ENCODE measurements at regions of chr1 and their contacts with region 1.

Region 1: DNA sequence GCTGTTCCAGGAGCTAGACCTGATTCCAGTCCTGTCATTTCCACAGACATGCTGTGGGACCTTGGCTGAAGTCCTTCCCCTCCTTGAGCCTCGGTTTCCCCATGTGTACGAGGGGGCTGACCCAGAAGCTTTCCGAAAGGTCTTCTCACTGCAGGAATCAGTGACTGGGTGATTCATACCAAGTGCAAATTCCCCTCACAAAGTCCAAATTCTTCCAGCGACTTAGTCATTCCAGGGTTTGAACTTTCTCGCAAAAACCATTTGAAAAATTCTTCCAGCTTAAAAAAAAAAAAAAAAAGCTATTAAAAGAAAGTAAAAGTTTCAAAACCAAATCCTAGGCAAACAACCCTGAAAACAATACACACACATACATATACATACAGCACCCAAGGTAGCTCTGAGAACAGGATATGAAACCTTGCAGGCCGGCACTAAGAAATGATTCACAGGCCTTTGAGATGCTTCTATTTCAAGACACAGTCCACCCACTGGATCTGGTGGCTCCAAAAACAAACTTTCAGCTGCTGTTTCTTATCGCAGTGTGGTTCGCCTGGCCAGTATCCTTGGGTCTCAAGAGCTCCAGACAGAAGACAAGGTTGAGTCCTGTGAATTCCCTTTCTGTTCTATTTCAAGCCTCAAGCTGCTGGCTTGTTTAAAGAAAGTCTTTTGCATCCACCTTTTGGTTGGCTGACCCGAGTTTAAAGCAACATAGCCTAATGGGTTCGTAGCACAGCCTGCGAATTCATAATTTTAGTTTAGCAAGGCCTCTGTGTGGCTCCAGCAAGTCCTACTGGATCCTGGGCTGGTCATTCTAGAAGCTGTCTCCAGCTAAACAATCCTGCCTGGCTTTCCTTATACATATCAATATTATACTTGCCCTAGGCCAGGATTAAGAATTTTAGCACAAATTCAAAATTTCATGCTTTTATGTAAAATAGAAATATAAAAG is 18.0 kb upstream of the ID3 start:
- DNase-seq: peak in 2 of 14 experiments; percentile 44 to 52
- ATAC-seq: peak; percentile 81
- H3K4me3 ChIP-seq: no peak overlapping the region
- H3K4me3 Mint-ChIP-seq: peak overlapping the region; percentile 64
- H3K27ac ChIP-seq: peak overlapping the region in 1 of 2 donors; percentile 13
- H3K27ac Mint-ChIP-seq: peak overlapping the region; percentile 43
- H3K4me1 ChIP-seq: peaks cover 29% of the 10 kb centered on the region
- H3K4me1 Mint-ChIP-seq: peaks cover 56% of the 10 kb centered on the region
- H3K27me3 ChIP-seq: no peaks in the 10 kb centered on the region
- H3K27me3 Mint-ChIP-seq: no peaks in the 10 kb centered on the region
- CTCF ChIP-seq: no peak

Region 2: GRCh38 chr1:23591460-23592208 is 14.3 kb after region 1 on chr1:
- CTCF ChIA-PET with region 1: interaction called, 3 read pairs
- POLR2A ChIA-PET with region 1: interaction called, 17 read pairs
- intact Hi-C with region 1: no loop called
- DNase-seq: peak in 3 of 14 experiments; percentile 24 to 63 (median 53)
- ATAC-seq: peak; percentile 23
- H3K4me3 ChIP-seq: no peak overlapping the region
- H3K4me3 Mint-ChIP-seq: peak overlapping the region; percentile 44
- H3K27ac ChIP-seq: peak overlapping the region in 1 of 2 donors; percentile 28
- H3K27ac Mint-ChIP-seq: peak overlapping the region; percentile 78
- H3K4me1 ChIP-seq: peaks cover 63% of the 10 kb centered on the region
- H3K4me1 Mint-ChIP-seq: peaks cover 65% of the 10 kb centered on the region
- H3K27me3 ChIP-seq: no peaks in the 10 kb centered on the region
- H3K27me3 Mint-ChIP-seq: no peaks in the 10 kb centered on the region
- CTCF ChIP-seq: no peak

Region 3: GRCh38 chr1:23598424-23598823 is 21.1 kb after region 1 on chr1:
- CTCF ChIA-PET with region 1: interaction called, 3 read pairs
- POLR2A ChIA-PET with region 1: interaction called, 26 read pairs
- intact Hi-C with region 1: loop called in 1 of 2 experiments (anchors 2 kb)
- DNase-seq: no peak
- ATAC-seq: no peak
- H3K4me3 ChIP-seq: no peak overlapping the region
- H3K4me3 Mint-ChIP-seq: no peak overlapping the region
- H3K27ac ChIP-seq: peak overlapping the region in 1 of 2 donors; percentile 2
- H3K27ac Mint-ChIP-seq: peak overlapping the region; percentile 78
- H3K4me1 ChIP-seq: peaks cover 96% of the 10 kb centered on the region
- H3K4me1 Mint-ChIP-seq: peaks cover 88% of the 10 kb centered on the region
- H3K27me3 ChIP-seq: no peaks in the 10 kb centered on the region
- H3K27me3 Mint-ChIP-seq: no peaks in the 10 kb centered on the region
- CTCF ChIP-seq: no peak

Region 4: DNA sequence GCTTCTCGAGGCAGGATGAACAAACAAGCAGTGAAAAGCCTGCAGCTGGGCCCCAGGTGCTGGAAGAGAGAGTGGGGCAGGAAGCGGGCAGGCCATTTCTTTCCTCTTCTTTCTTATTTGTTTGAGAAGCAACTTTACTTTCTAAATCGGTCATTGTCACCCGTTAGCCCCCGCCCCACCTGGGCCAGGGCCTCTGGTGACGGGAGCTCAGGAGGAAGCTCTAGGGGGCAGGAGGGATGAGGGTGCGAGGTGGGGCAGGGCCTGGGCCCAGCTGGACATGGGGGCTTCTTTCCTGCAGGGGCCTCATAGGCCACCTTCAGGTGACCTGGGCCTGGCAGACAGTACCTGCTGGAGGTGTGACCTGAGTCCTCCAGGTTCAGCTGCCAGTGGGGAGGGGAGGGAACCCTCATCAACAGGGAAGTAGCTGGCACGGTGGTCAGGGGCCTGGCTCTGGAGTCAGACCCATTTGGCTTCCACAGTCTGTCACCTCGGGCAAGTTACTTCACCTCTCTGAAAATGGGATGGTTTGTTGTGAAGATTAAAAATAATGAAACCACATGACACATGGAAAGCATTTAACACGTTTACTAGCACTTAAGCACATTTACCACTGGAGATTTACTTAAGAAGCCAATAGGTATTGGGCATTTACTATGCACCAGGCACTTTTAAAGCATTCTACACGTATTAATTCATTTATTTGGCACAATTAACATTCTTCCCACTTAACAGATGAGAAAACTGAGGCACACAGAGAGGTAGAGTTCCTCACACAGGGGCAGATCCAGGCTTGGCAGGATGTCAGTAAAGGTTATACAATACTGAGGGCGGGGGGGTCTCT is 36.1 kb after region 1 on chr1:
- CTCF ChIA-PET with region 1: no interaction called
- POLR2A ChIA-PET with region 1: interaction called, 26 read pairs
- intact Hi-C with region 1: no loop called
- DNase-seq: peak in 13 of 14 experiments; percentile 27 to 85 (median 60)
- ATAC-seq: peak; percentile 54
- H3K4me3 ChIP-seq: no peak overlapping the region
- H3K4me3 Mint-ChIP-seq: peak overlapping the region; percentile 51
- H3K27ac ChIP-seq: peak overlapping the region; percentile 71 to 72
- H3K27ac Mint-ChIP-seq: peak overlapping the region; percentile 97
- H3K4me1 ChIP-seq: peaks cover 73% of the 10 kb centered on the region
- H3K4me1 Mint-ChIP-seq: peaks cover 84% of the 10 kb centered on the region
- H3K27me3 ChIP-seq: no peaks in the 10 kb centered on the region
- H3K27me3 Mint-ChIP-seq: no peaks in the 10 kb centered on the region
- CTCF ChIP-seq: no peak

Region 5: GRCh38 chr1:23619299-23620188 is 42.2 kb after region 1 on chr1:
- CTCF ChIA-PET with region 1: no interaction called
- POLR2A ChIA-PET with region 1: interaction called, 26 read pairs
- intact Hi-C with region 1: no loop called
- DNase-seq: peak; percentile 75 to 96 (median 89)
- ATAC-seq: peak; percentile 87
- H3K4me3 ChIP-seq: peak overlapping the region; percentile 62
- H3K4me3 Mint-ChIP-seq: peak overlapping the region; percentile 78
- H3K27ac ChIP-seq: peak overlapping the region; percentile 77 to 82
- H3K27ac Mint-ChIP-seq: peak overlapping the region; percentile 97
- H3K4me1 ChIP-seq: peaks cover 88% of the 10 kb centered on the region
- H3K4me1 Mint-ChIP-seq: peaks cover 94% of the 10 kb centered on the region
- H3K27me3 ChIP-seq: no peaks in the 10 kb centered on the region
- H3K27me3 Mint-ChIP-seq: no peaks in the 10 kb centered on the region
- CTCF ChIP-seq: no peak

Region 6: GRCh38 chr1:23627069-23627735 is 49.9 kb after region 1 on chr1:
- CTCF ChIA-PET with region 1: no interaction called
- POLR2A ChIA-PET with region 1: interaction called, 13 read pairs
- intact Hi-C with region 1: no loop called
- DNase-seq: peak in 6 of 14 experiments; percentile 30 to 69 (median 62)
- ATAC-seq: peak; percentile 76
- H3K4me3 ChIP-seq: peak overlapping the region; percentile 72
- H3K4me3 Mint-ChIP-seq: peak overlapping the region; percentile 93
- H3K27ac ChIP-seq: peak overlapping the region; percentile 55 to 73
- H3K27ac Mint-ChIP-seq: peak overlapping the region; percentile 94
- H3K4me1 ChIP-seq: peaks cover 57% of the 10 kb centered on the region
- H3K4me1 Mint-ChIP-seq: peaks cover 66% of the 10 kb centered on the region
- H3K27me3 ChIP-seq: no peaks in the 10 kb centered on the region
- H3K27me3 Mint-ChIP-seq: no peaks in the 10 kb centered on the region
- CTCF ChIP-seq: no peak

Region 7: DNA sequence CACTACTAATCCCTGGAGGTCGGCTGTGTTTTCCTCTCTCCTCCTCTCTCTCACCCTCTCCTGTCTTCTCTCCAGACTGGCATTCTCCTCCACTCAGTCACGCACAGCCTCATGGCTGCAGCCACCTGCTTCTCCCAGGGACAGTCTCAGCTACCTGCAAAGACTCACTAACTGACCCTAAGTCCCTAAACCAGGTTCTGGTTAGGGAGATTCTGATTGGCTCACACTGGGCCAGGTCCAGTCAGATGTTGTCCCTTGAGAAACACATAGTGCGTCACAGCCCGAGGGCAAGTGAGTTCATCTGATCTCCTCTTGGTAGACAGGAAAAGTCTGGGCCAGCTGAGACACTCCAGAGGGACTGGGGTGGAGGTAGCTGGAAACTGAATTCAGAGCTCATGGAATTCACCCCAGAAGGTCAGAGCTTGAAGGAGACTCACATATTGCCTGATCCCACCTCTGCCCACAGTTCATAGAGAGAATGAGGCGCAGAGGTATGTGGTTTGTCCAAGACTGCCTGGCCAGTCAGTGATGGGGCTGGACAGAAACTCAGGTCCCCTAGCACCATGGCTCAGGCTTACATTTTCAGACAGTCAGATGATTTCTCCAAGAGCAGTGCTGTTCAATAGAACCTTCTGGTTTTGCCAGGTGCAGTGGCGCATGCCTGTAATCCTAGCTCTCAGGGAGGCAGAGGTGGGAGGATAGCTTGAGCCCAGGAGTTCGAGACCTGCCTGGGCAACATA is 73.9 kb after region 1 on chr1:
- CTCF ChIA-PET with region 1: no interaction called
- POLR2A ChIA-PET with region 1: no interaction called
- intact Hi-C with region 1: no loop called
- DNase-seq: no peak
- ATAC-seq: no peak
- H3K4me3 ChIP-seq: no peak overlapping the region
- H3K4me3 Mint-ChIP-seq: no peak overlapping the region
- H3K27ac ChIP-seq: no peak overlapping the region
- H3K27ac Mint-ChIP-seq: no peak overlapping the region
- H3K4me1 ChIP-seq: no peaks in the 10 kb centered on the region
- H3K4me1 Mint-ChIP-seq: no peaks in the 10 kb centered on the region
- H3K27me3 ChIP-seq: no peaks in the 10 kb centered on the region
- H3K27me3 Mint-ChIP-seq: no peaks in the 10 kb centered on the region
- CTCF ChIP-seq: no peak